ENCODE measurements at regions of chr16 and their contacts with region 1.

Region 1: GRCh38 chr16:89217388-89218191 is at the start of gene ZNF778:
- DNase-seq: peak; percentile 89
- ATAC-seq: peak; percentile 81
- H3K4me3 Mint-ChIP-seq: peak within 1 kb of the TSS; percentile 83
- H3K27ac Mint-ChIP-seq: peak within 1 kb of the TSS; percentile 93
- H3K4me1 Mint-ChIP-seq: peaks cover 19% of the 10 kb centered on the region
- H3K27me3 Mint-ChIP-seq: no peaks in the 10 kb centered on the region
- total RNA-seq, gene ZNF778: 4.7 to 5.0 TPM

Region 2: DNA sequence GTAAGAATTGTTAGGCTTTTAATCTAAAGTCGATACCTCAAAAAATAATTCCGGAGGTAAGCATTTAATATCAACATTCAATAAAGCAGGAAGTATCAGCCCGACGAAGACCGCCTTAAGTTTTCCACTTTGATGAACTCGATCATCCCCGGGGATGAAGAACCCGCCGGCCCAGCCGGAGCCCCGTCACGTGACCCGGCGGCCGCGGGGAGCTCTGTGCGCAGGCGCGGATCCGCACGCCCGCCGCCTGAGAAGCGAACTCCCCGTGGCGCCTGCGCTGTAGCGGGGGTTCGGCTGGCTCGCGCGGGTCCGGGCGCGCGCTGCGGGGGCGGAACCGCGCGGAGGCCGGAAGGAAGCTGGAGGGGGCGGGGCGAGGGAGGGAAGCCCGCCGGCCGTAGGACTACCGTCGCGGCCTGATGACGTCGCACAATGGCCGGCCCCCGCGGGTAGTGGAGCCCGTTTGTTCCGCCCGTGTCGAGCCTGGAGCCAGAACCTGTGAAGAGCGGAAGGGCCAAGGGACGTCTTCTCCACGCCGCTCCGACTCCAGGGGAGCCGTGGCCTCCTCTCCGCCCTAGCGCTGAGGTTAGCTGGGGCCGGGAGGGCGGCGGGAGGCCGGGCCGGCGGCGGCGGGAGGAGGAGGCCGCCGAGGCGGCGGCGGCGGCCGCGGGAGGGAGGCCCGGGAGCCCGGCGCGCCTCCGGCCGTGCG is 647.5 kb before region 1 on chr16 and contains the start of gene ZC3H18:
- CTCF ChIA-PET with region 1: no interaction called
- POLR2A ChIA-PET with region 1: no interaction called
- intact Hi-C with region 1: loop called in 1 of 2 experiments (anchors 10 kb)
- DNase-seq: peak; percentile 99
- ATAC-seq: peak; percentile 83
- H3K4me3 Mint-ChIP-seq: peak within 1 kb of the TSS; percentile 88
- H3K27ac Mint-ChIP-seq: peak within 1 kb of the TSS; percentile 79
- H3K4me1 Mint-ChIP-seq: peaks cover 44% of the 10 kb centered on the region
- H3K27me3 Mint-ChIP-seq: no peaks in the 10 kb centered on the region
- total RNA-seq, gene ZC3H18: 70.0 to 76.4 TPM

Region 3: GRCh38 chr16:88811769-88812512 is 405.6 kb before region 1 on chr16 and contains the start of gene APRT:
- CTCF ChIA-PET with region 1: interaction called, 3 read pairs
- POLR2A ChIA-PET with region 1: no interaction called
- intact Hi-C with region 1: loop called (anchors 1 to 5 kb)
- DNase-seq: peak; percentile 99
- ATAC-seq: peak; percentile 76
- H3K4me3 Mint-ChIP-seq: peak within 1 kb of the TSS; percentile 86
- H3K27ac Mint-ChIP-seq: peak within 1 kb of the TSS; percentile 94
- H3K4me1 Mint-ChIP-seq: peaks cover 22% of the 10 kb centered on the region
- H3K27me3 Mint-ChIP-seq: no peaks in the 10 kb centered on the region
- total RNA-seq, gene APRT: 105 to 179 TPM

Region 4: DNA sequence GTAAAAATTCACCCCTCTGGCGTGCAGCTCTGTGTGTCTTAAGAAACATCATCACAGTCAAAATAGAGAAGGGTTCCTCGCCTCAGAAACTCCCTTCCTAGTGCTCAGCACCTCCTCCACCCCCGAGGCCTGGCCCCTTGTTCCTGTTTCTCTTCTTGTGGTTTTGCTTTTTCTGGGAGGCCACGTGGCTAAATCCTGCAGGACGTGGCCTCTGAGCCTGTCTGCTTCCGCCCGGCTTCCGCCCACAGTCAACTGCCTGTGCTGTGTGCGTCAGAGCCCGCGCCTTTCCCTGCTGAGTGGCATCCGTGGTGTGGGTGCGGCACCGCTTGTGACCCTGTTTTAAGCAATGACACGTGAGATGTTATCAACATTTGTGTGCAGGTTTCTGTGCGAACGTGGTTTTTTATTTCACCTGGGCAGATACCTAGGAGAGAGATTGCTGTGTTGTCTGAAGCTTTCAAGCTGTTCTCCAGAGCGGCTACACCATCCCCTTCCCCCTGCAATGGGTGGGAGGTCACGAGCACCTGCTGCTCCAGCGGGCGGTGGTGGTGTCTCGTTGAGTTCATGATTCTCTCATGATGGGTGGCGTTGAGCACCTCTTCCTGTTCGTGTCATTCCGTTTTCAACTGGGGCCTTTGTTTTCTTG is 102.3 kb before region 1 on chr16:
- CTCF ChIA-PET with region 1: no interaction called
- POLR2A ChIA-PET with region 1: no interaction called
- intact Hi-C with region 1: loop called in 1 of 2 experiments (anchors 1 kb)
- DNase-seq: peak; percentile 90
- ATAC-seq: peak; percentile 86
- H3K4me3 Mint-ChIP-seq: peak overlapping the region; percentile 74
- H3K27ac Mint-ChIP-seq: peak overlapping the region; percentile 89
- H3K4me1 Mint-ChIP-seq: peaks cover 58% of the 10 kb centered on the region
- H3K27me3 Mint-ChIP-seq: no peaks in the 10 kb centered on the region

Region 5: GRCh38 chr16:89178453-89179147 is 39.0 kb before region 1 on chr16:
- CTCF ChIA-PET with region 1: no interaction called
- POLR2A ChIA-PET with region 1: no interaction called
- intact Hi-C with region 1: no loop called
- DNase-seq: no peak
- ATAC-seq: no peak
- H3K4me3 Mint-ChIP-seq: no peak overlapping the region
- H3K27ac Mint-ChIP-seq: no peak overlapping the region
- H3K4me1 Mint-ChIP-seq: peaks cover 6% of the 10 kb centered on the region
- H3K27me3 Mint-ChIP-seq: no peaks in the 10 kb centered on the region

Region 6: GRCh38 chr16:89201439-89202377 is 15.9 kb before region 1 on chr16:
- CTCF ChIA-PET with region 1: interaction called, 3 read pairs
- POLR2A ChIA-PET with region 1: no interaction called
- intact Hi-C with region 1: loop called in 1 of 2 experiments (anchors 1 kb)
- DNase-seq: peak; percentile 94
- ATAC-seq: peak; percentile 97
- H3K4me3 Mint-ChIP-seq: peak overlapping the region; percentile 44
- H3K27ac Mint-ChIP-seq: no peak overlapping the region
- H3K4me1 Mint-ChIP-seq: peaks cover 13% of the 10 kb centered on the region
- H3K27me3 Mint-ChIP-seq: peaks cover 32% of the 10 kb centered on the region

Region 7: DNA sequence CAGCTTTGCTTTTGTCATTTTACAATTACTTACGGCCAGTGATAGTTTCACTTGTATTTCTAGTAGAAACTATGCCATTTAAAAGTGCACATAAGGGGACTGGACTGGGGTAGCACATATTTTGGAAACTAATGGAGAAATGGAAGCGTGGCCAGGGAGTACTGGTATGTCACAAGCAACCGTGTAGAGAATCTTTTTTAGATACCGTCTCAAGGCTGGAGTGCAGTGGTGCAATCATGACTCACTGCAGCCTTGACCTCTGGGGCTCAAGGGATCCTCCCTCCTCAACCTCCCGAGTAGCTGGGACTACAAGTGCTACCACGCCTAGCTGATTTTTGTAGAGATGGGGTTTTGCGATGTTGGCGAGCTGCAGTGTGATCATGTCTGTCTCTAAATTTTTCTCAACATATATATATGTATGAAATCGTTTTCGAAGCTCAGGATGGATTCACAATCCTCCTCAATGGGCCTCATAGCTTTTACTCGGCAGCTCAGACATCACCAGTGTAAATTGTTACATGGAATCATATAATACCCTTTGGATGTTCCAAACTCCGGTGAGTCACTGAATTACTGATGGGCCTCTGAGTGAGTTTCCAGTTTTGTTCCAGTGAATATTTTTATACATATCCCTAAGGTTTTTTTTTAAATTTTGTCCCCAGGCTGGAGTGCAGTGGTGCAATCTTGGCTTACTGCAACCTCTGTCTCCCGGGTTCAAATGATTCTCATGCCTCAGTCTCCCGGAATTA is 51.6 kb after region 1 on chr16:
- CTCF ChIA-PET with region 1: no interaction called
- POLR2A ChIA-PET with region 1: no interaction called
- intact Hi-C with region 1: no loop called
- DNase-seq: no peak
- ATAC-seq: no peak
- H3K4me3 Mint-ChIP-seq: no peak overlapping the region
- H3K27ac Mint-ChIP-seq: peak overlapping the region; percentile 19
- H3K4me1 Mint-ChIP-seq: no peaks in the 10 kb centered on the region
- H3K27me3 Mint-ChIP-seq: no peaks in the 10 kb centered on the region

Region 8: GRCh38 chr16:89507834-89508590 is 290.4 kb after region 1 on chr16 and contains the start of gene SPG7:
- CTCF ChIA-PET with region 1: interaction called, 3 read pairs
- POLR2A ChIA-PET with region 1: no interaction called
- intact Hi-C with region 1: loop called in 1 of 2 experiments (anchors 1 kb)
- DNase-seq: peak; percentile 94
- ATAC-seq: peak; percentile 74
- H3K4me3 Mint-ChIP-seq: peak within 1 kb of the TSS; percentile 90
- H3K27ac Mint-ChIP-seq: peak within 1 kb of the TSS; percentile 97
- H3K4me1 Mint-ChIP-seq: peaks cover 31% of the 10 kb centered on the region
- H3K27me3 Mint-ChIP-seq: no peaks in the 10 kb centered on the region
- total RNA-seq, gene SPG7: 68.6 to 76.7 TPM